HCT116 (cell line): ENCODE measurements at regions of chr10 and their contacts with region 1.

Region 1: DNA sequence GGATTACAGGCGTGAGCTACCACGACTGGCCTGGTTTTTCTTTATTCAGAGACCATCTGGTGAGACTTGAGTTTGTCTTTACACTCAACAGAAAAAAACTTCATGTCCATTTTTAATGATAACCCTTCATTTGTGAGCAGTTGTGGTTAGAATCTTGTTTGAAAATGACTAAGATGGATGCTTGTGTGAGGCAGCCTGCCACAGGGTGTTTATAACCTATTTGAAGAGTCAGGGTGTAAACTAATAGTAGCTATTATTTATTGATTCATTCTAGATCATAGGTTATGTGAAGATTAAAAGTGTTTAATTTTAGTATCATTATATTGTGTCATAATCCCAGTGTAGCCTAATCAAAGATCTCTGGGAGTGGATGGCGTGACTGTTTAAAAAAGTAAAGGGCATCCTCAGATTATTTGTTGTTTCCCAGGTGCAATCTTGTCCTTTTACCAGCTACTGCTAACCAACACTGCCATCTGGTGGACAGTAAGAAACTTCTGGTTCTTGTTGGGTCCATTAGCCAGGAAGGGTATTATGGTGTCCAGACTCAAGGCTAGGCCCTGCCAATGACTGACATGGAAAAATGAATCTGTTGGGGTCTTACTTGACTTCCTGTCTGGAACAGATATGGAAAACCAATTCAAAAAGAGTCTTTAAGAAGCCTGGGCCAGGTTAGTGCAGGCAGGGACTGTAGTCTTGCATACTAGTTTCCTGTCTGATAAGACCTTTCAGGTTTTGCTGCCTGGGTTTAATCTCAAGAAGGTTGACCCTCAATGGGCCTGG is 24.9 kb downstream of the NRBF2 start:
- DNase-seq: peak; percentile 85
- ATAC-seq: peak; percentile 90
- H3K4me3 ChIP-seq: no peak overlapping the region
- H3K27ac ChIP-seq: no peak overlapping the region
- H3K4me1 ChIP-seq: no peaks in the 10 kb centered on the region
- H3K27me3 ChIP-seq: no peaks in the 10 kb centered on the region
- CTCF ChIP-seq: peak; percentile 71 to 84 (median 80)
- POLR2A ChIP-seq: no peak
- RAD21 ChIP-seq: peak; percentile 92

Region 2: DNA sequence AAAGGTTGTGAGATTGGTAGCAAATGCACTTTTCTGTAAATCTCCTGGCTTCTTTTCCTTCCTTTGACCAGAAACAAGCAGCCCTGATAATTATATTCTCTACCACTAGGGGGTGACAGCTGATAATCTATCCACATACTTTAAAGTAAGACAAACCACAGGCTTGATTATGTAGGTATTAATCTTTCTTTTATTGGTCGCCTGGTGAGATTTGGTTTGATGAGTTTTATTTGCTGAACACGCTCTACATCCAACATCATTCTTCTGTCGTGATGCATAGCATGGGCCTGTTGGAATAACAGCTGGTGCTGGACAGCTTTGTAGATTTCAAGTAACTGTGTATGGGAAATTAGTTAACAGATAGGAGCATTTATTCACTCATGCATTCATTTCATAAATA is 720.3 kb before region 1 on chr10:
- CTCF ChIA-PET with region 1: interaction called, 4 read pairs
- POLR2A ChIA-PET with region 1: no interaction called
- RAD21 ChIA-PET with region 1: no interaction called
- intact Hi-C with region 1: loop called (anchors 1 kb)
- DNase-seq: peak; percentile 53
- ATAC-seq: peak; percentile 75
- H3K4me3 ChIP-seq: no peak overlapping the region
- H3K27ac ChIP-seq: no peak overlapping the region
- H3K4me1 ChIP-seq: peaks cover 8 to 13% of the 10 kb centered on the region in 2 experiments; a peak in 3 of 4 replicates
- H3K27me3 ChIP-seq: peaks cover 10% of the 10 kb centered on the region; the same call in 1 of the 2 replicates
- CTCF ChIP-seq: peak; percentile 57 to 90 (median 58)
- POLR2A ChIP-seq: no peak
- RAD21 ChIP-seq: peak; percentile 78

Region 3: DNA sequence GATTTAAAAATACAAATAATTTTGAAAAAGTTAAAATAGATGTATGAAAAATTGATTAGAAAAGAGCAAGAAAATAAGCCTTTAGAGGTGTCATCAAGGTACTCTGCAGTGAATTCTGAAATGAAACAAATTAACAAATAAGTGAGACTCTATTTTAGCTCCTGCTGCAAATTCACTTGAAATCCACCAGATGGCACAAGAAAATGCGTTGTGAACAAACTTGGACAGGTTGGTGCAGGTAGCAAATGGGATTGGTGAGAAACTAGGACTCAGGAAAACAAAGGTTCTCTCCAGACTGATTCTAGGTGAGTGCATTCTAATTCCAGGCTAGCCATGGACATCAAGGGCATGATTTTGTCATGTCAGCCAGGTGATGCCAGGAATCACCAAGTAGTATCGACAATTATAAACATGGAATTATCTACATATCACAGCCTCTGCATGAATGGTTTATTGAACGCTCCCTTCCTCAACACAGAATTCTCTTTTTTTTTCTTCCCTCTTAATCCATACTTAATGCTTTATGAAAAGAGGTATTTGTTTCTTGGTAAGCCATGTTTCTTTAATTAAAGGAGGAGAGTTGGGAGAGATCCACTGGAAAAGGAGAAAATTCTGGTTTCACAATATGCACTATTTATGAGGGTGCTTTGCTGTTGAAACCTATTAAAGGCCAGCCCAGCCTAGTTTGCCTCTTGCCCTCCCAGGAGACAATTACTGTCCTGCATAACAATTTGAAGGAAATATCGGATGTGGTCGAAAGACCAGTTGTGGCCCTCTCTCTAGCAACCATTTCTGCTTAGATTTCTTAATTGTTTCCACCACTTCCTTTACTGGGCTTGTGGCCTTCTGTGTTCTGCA is 665.8 kb before region 1 on chr10:
- CTCF ChIA-PET with region 1: interaction called, 9 read pairs
- POLR2A ChIA-PET with region 1: no interaction called
- RAD21 ChIA-PET with region 1: no interaction called
- intact Hi-C with region 1: loop called (anchors 1 kb)
- DNase-seq: peak; percentile 48
- ATAC-seq: peak; percentile 77
- H3K4me3 ChIP-seq: no peak overlapping the region
- H3K27ac ChIP-seq: no peak overlapping the region
- H3K4me1 ChIP-seq: no peaks in the 10 kb centered on the region
- H3K27me3 ChIP-seq: no peaks in the 10 kb centered on the region
- CTCF ChIP-seq: peak; percentile 40 to 69 (median 63); a peak in 5 of 6 replicates
- POLR2A ChIP-seq: no peak
- RAD21 ChIP-seq: peak; percentile 66

Region 4: GRCh38 chr10:62594093-62594520 is 563.9 kb before region 1 on chr10:
- CTCF ChIA-PET with region 1: interaction called, 17 read pairs
- POLR2A ChIA-PET with region 1: no interaction called
- RAD21 ChIA-PET with region 1: interaction called, 3 read pairs
- intact Hi-C with region 1: loop called (anchors 1 kb)
- DNase-seq: peak; percentile 53
- ATAC-seq: peak; percentile 97
- H3K4me3 ChIP-seq: no peak overlapping the region
- H3K27ac ChIP-seq: no peak overlapping the region
- H3K4me1 ChIP-seq: no peaks in the 10 kb centered on the region
- H3K27me3 ChIP-seq: no peaks in the 10 kb centered on the region
- CTCF ChIP-seq: peak; percentile 87 to 96 (median 89)
- POLR2A ChIP-seq: no peak
- RAD21 ChIP-seq: peak; percentile 92

Region 5: GRCh38 chr10:62610649-62611229 is 547.3 kb before region 1 on chr10:
- CTCF ChIA-PET with region 1: interaction called, 20 read pairs
- POLR2A ChIA-PET with region 1: no interaction called
- RAD21 ChIA-PET with region 1: interaction called, 3 to 8 read pairs
- intact Hi-C with region 1: loop called (anchors 1 kb)
- DNase-seq: peak; percentile 60
- ATAC-seq: peak; percentile 98
- H3K4me3 ChIP-seq: no peak overlapping the region
- H3K27ac ChIP-seq: no peak overlapping the region
- H3K4me1 ChIP-seq: peaks cover 0 to 14% of the 10 kb centered on the region in 2 experiments; a peak in 2 of 4 replicates
- H3K27me3 ChIP-seq: no peaks in the 10 kb centered on the region
- CTCF ChIP-seq: peak; percentile 84 to 99 (median 97)
- POLR2A ChIP-seq: no peak
- RAD21 ChIP-seq: peak; percentile 96

Region 6: DNA sequence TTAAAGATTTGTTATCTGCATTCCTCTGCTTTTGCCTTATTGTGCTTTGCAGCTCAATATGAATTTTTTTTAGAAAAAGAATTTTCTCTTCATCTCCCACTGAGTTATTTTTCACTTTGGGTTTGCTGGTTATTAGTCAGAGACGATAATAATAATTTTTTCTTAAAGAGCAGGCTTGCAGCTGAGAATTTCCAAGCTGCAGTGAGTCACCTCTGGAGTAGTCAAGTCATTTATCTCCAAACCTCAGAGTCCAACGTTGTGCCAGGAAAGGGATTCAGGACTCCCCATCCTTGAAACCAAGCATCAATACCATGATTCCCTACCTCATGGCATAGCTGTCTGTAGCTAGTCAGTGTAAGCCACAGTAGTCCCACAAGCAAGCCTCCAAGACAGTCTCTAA is 326.7 kb before region 1 on chr10:
- CTCF ChIA-PET with region 1: no interaction called
- POLR2A ChIA-PET with region 1: no interaction called
- RAD21 ChIA-PET with region 1: no interaction called
- intact Hi-C with region 1: no loop called
- DNase-seq: no peak
- ATAC-seq: no peak
- H3K4me3 ChIP-seq: no peak overlapping the region
- H3K27ac ChIP-seq: no peak overlapping the region
- H3K4me1 ChIP-seq: no peaks in the 10 kb centered on the region; a peak in 1 of 4 replicates
- H3K27me3 ChIP-seq: no peaks in the 10 kb centered on the region
- CTCF ChIP-seq: no peak
- POLR2A ChIP-seq: no peak
- RAD21 ChIP-seq: no peak

Region 7: DNA sequence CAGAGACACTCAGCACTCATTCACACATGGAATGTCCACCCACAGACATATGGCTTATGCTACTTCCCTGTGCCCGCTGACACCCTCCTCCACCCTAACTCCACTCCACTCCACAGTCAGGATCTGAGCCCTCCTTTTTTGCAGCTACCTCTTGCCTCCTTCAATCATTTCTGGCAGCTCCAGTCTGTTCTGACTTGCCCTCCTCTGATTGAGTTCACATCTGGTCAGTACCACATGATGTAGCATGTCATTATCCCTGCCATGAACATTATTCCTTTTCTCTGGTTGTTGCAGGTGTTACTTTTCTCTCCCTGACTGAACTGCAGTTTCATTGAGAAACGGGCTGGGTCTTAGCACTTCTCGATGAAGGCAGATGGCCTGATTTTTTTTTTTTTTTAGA is 211.8 kb before region 1 on chr10:
- CTCF ChIA-PET with region 1: no interaction called
- POLR2A ChIA-PET with region 1: no interaction called
- RAD21 ChIA-PET with region 1: no interaction called
- intact Hi-C with region 1: no loop called
- DNase-seq: no peak
- ATAC-seq: no peak
- H3K4me3 ChIP-seq: no peak overlapping the region
- H3K27ac ChIP-seq: no peak overlapping the region
- H3K4me1 ChIP-seq: no peaks in the 10 kb centered on the region
- H3K27me3 ChIP-seq: no peaks in the 10 kb centered on the region
- CTCF ChIP-seq: no peak
- POLR2A ChIP-seq: no peak
- RAD21 ChIP-seq: no peak

Region 8: GRCh38 chr10:63003816-63004453 is 154.1 kb before region 1 on chr10:
- CTCF ChIA-PET with region 1: no interaction called
- POLR2A ChIA-PET with region 1: no interaction called
- RAD21 ChIA-PET with region 1: no interaction called
- intact Hi-C with region 1: loop called (anchors 2 kb)
- DNase-seq: peak; percentile 7
- ATAC-seq: no peak; the same call in 1 of the 2 replicates
- H3K4me3 ChIP-seq: no peak overlapping the region
- H3K27ac ChIP-seq: no peak overlapping the region
- H3K4me1 ChIP-seq: no peaks in the 10 kb centered on the region
- H3K27me3 ChIP-seq: no peaks in the 10 kb centered on the region
- CTCF ChIP-seq: peak; percentile 15 to 54 (median 41); a peak in 4 of 6 replicates
- POLR2A ChIP-seq: no peak
- RAD21 ChIP-seq: peak; percentile 36; the same call in 1 of the 2 replicates

Region 9: GRCh38 chr10:63064706-63065105 is 93.3 kb before region 1 on chr10:
- CTCF ChIA-PET with region 1: no interaction called
- POLR2A ChIA-PET with region 1: no interaction called
- RAD21 ChIA-PET with region 1: no interaction called
- intact Hi-C with region 1: no loop called
- DNase-seq: no peak
- ATAC-seq: no peak
- H3K4me3 ChIP-seq: no peak overlapping the region
- H3K27ac ChIP-seq: no peak overlapping the region
- H3K4me1 ChIP-seq: no peaks in the 10 kb centered on the region
- H3K27me3 ChIP-seq: no peaks in the 10 kb centered on the region
- CTCF ChIP-seq: no peak
- POLR2A ChIP-seq: no peak
- RAD21 ChIP-seq: no peak

Region 10: DNA sequence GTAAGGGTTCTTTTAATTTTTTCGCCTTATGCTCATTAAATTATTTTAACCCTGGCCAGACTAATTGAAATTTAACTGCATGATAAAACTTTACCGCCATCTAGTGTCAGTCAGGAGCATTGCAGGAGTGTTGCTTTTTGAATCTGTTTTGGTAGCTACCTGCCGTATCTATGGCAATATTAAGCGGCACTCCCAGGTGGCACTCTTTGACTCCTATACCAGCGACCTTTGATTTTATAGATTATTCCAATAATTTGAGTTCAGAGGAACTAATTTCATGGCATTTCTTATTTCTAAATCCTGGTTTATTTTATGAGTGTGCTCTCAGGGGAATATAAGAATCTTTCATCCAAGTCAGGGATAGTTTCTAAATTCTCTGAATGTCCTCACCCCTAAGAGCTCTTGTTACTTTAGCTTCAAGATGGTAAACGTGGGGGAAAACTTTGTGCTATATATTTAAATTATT is 562.1 kb after region 1 on chr10:
- CTCF ChIA-PET with region 1: interaction called, 13 read pairs
- POLR2A ChIA-PET with region 1: no interaction called
- RAD21 ChIA-PET with region 1: interaction called in 1 of 2 experiments, 3 read pairs
- intact Hi-C with region 1: no loop called
- DNase-seq: peak; percentile 62
- ATAC-seq: peak; percentile 75
- H3K4me3 ChIP-seq: no peak overlapping the region
- H3K27ac ChIP-seq: no peak overlapping the region
- H3K4me1 ChIP-seq: peaks cover 17 to 34% of the 10 kb centered on the region in 2 experiments; a peak in 3 of 4 replicates
- H3K27me3 ChIP-seq: no peaks in the 10 kb centered on the region
- CTCF ChIP-seq: peak; percentile 90 to 96 (median 93)
- POLR2A ChIP-seq: no peak
- RAD21 ChIP-seq: peak; percentile 98